CD4-positive, alpha-beta memory T cell (primary cell): ENCODE measurements at regions of chr7 and their contacts with region 1.

Region 1: GRCh38 chr7:99558306-99559174 is at the start of gene ZNF655:
- DNase-seq: peak; percentile 92 to 95 (median 92)
- H3K4me3 ChIP-seq: peak within 1 kb of the TSS; percentile 76 to 97
- H3K4me3 Mint-ChIP-seq: peak within 1 kb of the TSS; percentile 91 to 100 (median 98)
- H3K27ac ChIP-seq: peak within 1 kb of the TSS; percentile 98
- H3K27ac Mint-ChIP-seq: peak within 1 kb of the TSS; percentile 96 to 99 (median 99)
- H3K4me1 ChIP-seq: peaks cover 43% of the 10 kb centered on the region
- H3K4me1 Mint-ChIP-seq: peaks cover 27 to 56% (median 42%) of the 10 kb centered on the region in 4 donors
- H3K27me3 ChIP-seq: no peaks in the 10 kb centered on the region
- H3K27me3 Mint-ChIP-seq: no peaks in the 10 kb centered on the region
- total RNA-seq, gene ZNF655: 137 to 150 TPM

Region 2: GRCh38 chr7:99380032-99380822 is 178.3 kb before region 1 on chr7:
- CTCF ChIA-PET with region 1: no interaction called
- POLR2A ChIA-PET with region 1: interaction called, 10 read pairs
- intact Hi-C with region 1: no loop called
- DNase-seq: peak; percentile 23 to 62 (median 33)
- H3K4me3 ChIP-seq: peak overlapping the region; percentile 64 to 75
- H3K4me3 Mint-ChIP-seq: peak overlapping the region; percentile 69 to 93 (median 87)
- H3K27ac ChIP-seq: peak overlapping the region; percentile 93
- H3K27ac Mint-ChIP-seq: peak overlapping the region; percentile 93 to 99 (median 98)
- H3K4me1 ChIP-seq: peaks cover 90% of the 10 kb centered on the region
- H3K4me1 Mint-ChIP-seq: peaks cover 32 to 77% (median 55%) of the 10 kb centered on the region in 4 donors
- H3K27me3 ChIP-seq: no peaks in the 10 kb centered on the region
- H3K27me3 Mint-ChIP-seq: no peaks in the 10 kb centered on the region

Region 3: GRCh38 chr7:99472561-99473243 is 85.8 kb before region 1 on chr7 and contains the start of gene ZNF789:
- CTCF ChIA-PET with region 1: no interaction called
- POLR2A ChIA-PET with region 1: interaction called, 9 read pairs
- intact Hi-C with region 1: loop called (anchors 2 kb)
- DNase-seq: peak; percentile 94 to 99 (median 95)
- H3K4me3 ChIP-seq: peak within 1 kb of the TSS; percentile 90 to 93
- H3K4me3 Mint-ChIP-seq: peak within 1 kb of the TSS; percentile 92 to 99 (median 96)
- H3K27ac ChIP-seq: peak within 1 kb of the TSS; percentile 80
- H3K27ac Mint-ChIP-seq: peak within 1 kb of the TSS; percentile 90 to 98 (median 95)
- H3K4me1 ChIP-seq: peaks cover 14% of the 10 kb centered on the region
- H3K4me1 Mint-ChIP-seq: peaks cover 17 to 49% (median 31%) of the 10 kb centered on the region in 4 donors
- H3K27me3 ChIP-seq: no peaks in the 10 kb centered on the region
- H3K27me3 Mint-ChIP-seq: no peaks in the 10 kb centered on the region
- total RNA-seq, gene ZNF789: 20.8 to 21.2 TPM

Region 4: DNA sequence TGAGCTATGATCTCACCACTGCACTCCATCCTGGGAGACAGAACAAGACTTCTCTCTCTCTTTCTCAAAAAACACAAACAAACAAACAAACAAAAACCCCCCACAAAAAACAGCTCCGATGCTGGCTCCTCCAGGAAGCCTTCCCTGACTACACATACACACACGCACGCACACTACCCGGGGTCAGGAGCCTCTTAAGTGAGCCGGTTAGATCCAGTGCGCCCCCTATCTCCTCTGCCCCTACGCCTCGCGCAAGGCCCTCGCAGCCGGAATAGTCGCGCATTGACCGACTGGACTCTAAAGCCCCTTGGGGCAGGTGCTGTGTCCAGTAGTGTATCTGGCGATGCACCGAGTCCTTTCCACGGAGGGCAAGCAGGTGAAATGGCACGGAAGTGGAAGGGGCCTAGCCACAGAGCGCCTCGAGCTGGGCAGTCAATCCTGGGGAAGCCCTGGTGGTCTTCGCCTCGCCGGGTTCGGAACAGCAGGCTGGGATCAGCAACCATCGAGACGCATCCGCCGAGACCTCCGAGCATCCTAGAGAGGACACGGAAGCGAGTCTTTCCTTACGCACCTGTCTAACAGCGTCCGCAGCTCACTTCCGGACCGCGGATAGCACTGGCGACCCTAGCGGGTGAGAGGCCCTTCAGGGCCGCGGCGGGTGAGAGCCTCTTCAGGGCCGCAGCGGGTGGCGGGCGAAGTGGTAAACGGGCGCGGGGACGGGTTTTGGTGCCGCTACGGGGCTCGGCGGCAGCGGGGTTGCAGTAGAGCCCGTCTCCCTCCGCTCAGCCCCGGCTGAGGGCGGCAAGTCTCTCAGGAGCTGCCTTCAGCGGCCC is 58.0 kb after region 1 on chr7 and contains the start of gene ZSCAN25:
- CTCF ChIA-PET with region 1: interaction called, 3 read pairs
- POLR2A ChIA-PET with region 1: interaction called, 53 read pairs
- intact Hi-C with region 1: loop called (anchors 2 kb)
- DNase-seq: peak; percentile 85 to 86 (median 86)
- H3K4me3 ChIP-seq: peak within 1 kb of the TSS; percentile 79
- H3K4me3 Mint-ChIP-seq: peak within 1 kb of the TSS; percentile 96 to 99 (median 98)
- H3K27ac ChIP-seq: peak within 1 kb of the TSS; percentile 96
- H3K27ac Mint-ChIP-seq: peak within 1 kb of the TSS; percentile 90 to 99 (median 96)
- H3K4me1 ChIP-seq: peaks cover 21% of the 10 kb centered on the region
- H3K4me1 Mint-ChIP-seq: peaks cover 18 to 53% (median 37%) of the 10 kb centered on the region in 4 donors
- H3K27me3 ChIP-seq: no peaks in the 10 kb centered on the region
- H3K27me3 Mint-ChIP-seq: no peaks in the 10 kb centered on the region
- total RNA-seq, gene ZSCAN25: 40.4 to 43.1 TPM